ENCODE measurements at regions of chr13 and their contacts with region 1.

Region 1: GRCh38 chr13:42110410-42111155 is 62.1 kb downstream of the DGKH start:
- DNase-seq: peak in 21 of 35 experiments; percentile 2 to 82 (median 25)
- ATAC-seq: peak; percentile 52 to 71 (median 62)
- H3K4me3 ChIP-seq: no peak overlapping the region
- H3K4me3 Mint-ChIP-seq: no peak overlapping the region
- H3K27ac ChIP-seq: no peak overlapping the region
- H3K27ac Mint-ChIP-seq: no peak overlapping the region
- H3K4me1 ChIP-seq: no peaks in the 10 kb centered on the region
- H3K4me1 Mint-ChIP-seq: peaks cover 6 to 10% (median 8%) of the 10 kb centered on the region in 3 donors
- H3K27me3 ChIP-seq: no peaks in the 10 kb centered on the region
- H3K27me3 Mint-ChIP-seq: no peaks in the 10 kb centered on the region

Region 2: DNA sequence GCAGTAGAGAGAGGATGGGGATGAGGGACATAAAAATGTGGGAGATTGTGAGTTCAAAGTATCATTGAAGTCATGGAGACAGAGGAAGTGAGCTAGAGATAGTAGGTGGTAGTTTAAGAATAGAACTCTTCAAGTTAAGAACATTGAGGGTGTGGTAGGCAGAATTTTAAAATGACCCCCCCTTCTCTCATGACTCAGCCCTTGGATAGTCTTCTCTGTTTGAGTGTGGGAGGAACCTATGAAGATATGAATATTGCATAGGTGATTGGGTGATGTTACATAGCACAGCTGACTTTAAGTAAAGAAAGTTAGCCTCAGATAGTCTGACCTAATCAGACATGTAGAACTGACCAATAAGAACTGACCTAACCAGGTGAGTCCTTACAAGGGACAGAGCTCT is 1862.7 kb before region 1 on chr13:
- CTCF ChIA-PET with region 1: no interaction called
- POLR2A ChIA-PET with region 1: no interaction called
- DNase-seq: no peak
- ATAC-seq: no peak
- H3K4me3 ChIP-seq: no peak overlapping the region
- H3K4me3 Mint-ChIP-seq: no peak overlapping the region
- H3K27ac ChIP-seq: no peak overlapping the region
- H3K27ac Mint-ChIP-seq: no peak overlapping the region
- H3K4me1 ChIP-seq: no peaks in the 10 kb centered on the region
- H3K4me1 Mint-ChIP-seq: peaks cover 19 to 28% (median 22%) of the 10 kb centered on the region in 3 donors
- H3K27me3 ChIP-seq: no peaks in the 10 kb centered on the region
- H3K27me3 Mint-ChIP-seq: no peaks in the 10 kb centered on the region

Region 3: DNA sequence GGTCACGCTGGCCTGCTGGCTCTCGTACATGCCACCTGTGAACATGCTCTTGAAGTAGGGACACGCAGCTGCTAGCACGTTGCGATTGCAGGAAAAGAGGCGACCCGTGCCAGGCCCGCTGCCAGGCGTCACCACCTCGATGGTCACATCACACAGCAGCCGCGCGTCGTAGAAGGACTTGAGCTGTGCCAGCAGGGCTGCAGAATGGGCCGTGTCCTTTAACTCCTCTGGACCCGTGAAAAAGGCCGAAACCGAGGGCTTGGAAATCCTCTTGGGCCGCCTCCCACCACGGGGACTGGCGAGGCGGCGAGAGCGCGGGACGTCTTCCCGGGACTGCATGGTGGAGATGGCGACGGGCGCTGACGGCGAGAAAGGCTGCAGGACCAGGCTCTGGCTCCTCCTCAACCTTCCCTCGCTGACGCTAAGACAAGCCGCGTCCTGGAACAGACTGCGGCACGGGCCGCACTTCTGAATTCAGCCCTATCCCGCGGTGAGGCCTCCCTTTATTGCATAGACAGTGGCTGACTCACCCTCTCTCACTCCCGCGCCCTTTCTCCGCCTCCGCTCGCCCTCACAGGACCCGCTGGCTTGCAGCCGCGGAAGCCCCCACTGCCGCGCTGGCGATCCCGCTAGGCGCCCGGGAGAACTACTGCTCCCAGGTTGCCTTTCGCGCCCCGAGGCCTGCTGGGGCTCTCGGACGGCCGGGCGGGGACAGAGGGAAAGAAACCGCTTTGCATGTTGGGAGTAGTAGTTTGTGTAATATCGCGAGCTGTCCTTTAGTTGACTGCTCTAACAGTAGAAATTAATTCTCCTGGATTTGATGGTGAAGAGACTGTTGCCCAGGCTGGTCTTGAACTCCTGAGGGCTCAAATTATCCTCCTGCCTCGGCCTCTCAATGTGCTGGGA is 916.4 kb before region 1 on chr13 and contains the start of gene KBTBD7:
- CTCF ChIA-PET with region 1: no interaction called
- POLR2A ChIA-PET with region 1: no interaction called
- DNase-seq: peak; percentile 76 to 91 (median 83)
- ATAC-seq: peak; percentile 98 to 99 (median 98)
- H3K4me3 ChIP-seq: peak within 1 kb of the TSS; percentile 94 to 95
- H3K4me3 Mint-ChIP-seq: peak within 1 kb of the TSS; percentile 87 to 95 (median 92)
- H3K27ac ChIP-seq: peak within 1 kb of the TSS; percentile 76
- H3K27ac Mint-ChIP-seq: peak within 1 kb of the TSS; percentile 89 to 90
- H3K4me1 ChIP-seq: peaks cover 10 to 18% of the 10 kb centered on the region in 2 experiments
- H3K4me1 Mint-ChIP-seq: peaks cover 38 to 47% (median 43%) of the 10 kb centered on the region in 3 donors
- H3K27me3 ChIP-seq: no peaks in the 10 kb centered on the region
- H3K27me3 Mint-ChIP-seq: no peaks in the 10 kb centered on the region
- total RNA-seq, gene KBTBD7: 2.6 to 10.9 (median 9.3) TPM

Region 4: GRCh38 chr13:41668130-41668757 is 442.3 kb before region 1 on chr13:
- CTCF ChIA-PET with region 1: interaction called, 4 to 33 read pairs
- POLR2A ChIA-PET with region 1: no interaction called
- DNase-seq: peak in 20 of 35 experiments; percentile 1 to 70 (median 10)
- ATAC-seq: peak; percentile 65 to 81 (median 68)
- H3K4me3 ChIP-seq: no peak overlapping the region
- H3K4me3 Mint-ChIP-seq: no peak overlapping the region
- H3K27ac ChIP-seq: no peak overlapping the region
- H3K27ac Mint-ChIP-seq: no peak overlapping the region
- H3K4me1 ChIP-seq: no peaks in the 10 kb centered on the region
- H3K4me1 Mint-ChIP-seq: no peaks in the 10 kb centered on the region
- H3K27me3 ChIP-seq: no peaks in the 10 kb centered on the region
- H3K27me3 Mint-ChIP-seq: no peaks in the 10 kb centered on the region

Region 5: GRCh38 chr13:41955605-41956004 is 155.0 kb before region 1 on chr13:
- CTCF ChIA-PET with region 1: no interaction called
- POLR2A ChIA-PET with region 1: no interaction called
- DNase-seq: no peak
- ATAC-seq: no peak
- H3K4me3 ChIP-seq: no peak overlapping the region
- H3K4me3 Mint-ChIP-seq: no peak overlapping the region
- H3K27ac ChIP-seq: no peak overlapping the region
- H3K27ac Mint-ChIP-seq: no peak overlapping the region
- H3K4me1 ChIP-seq: peaks cover 10 to 11% of the 10 kb centered on the region in 2 experiments
- H3K4me1 Mint-ChIP-seq: peaks cover 54 to 68% (median 56%) of the 10 kb centered on the region in 3 donors
- H3K27me3 ChIP-seq: no peaks in the 10 kb centered on the region
- H3K27me3 Mint-ChIP-seq: no peaks in the 10 kb centered on the region

Region 6: DNA sequence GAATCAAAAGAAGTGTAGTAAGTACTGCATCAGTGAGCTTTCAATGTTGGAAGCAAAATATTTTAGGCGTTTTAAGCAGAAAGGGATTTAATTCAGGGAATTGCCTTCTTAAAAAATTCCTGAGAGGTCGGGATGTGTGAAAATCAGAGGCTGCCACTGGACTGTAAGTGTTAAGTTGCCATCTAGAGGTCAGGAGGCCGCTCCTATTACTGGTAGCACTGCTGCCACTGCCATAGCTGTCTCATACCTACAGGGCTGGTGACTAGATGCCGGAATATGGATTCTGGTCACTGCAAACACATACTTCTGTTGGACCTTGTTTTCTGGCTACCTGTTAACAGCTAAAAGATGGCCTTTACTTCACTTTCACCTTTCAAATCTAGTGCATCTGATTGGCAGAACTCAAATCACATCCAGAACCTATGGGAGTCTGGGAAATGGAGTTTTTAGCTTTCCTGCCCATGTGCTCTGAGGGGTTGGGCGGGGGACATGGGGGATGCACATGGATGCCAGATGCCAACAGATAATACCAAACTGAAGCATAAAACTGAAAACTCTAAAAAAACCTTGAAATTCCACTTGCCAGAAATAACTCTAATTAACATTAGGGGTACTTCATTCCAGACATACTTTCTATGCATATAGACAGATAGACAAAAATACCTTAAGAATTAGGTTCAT is 32.3 kb before region 1 on chr13:
- CTCF ChIA-PET with region 1: no interaction called
- POLR2A ChIA-PET with region 1: no interaction called
- DNase-seq: no peak
- ATAC-seq: no peak
- H3K4me3 ChIP-seq: no peak overlapping the region
- H3K4me3 Mint-ChIP-seq: no peak overlapping the region
- H3K27ac ChIP-seq: no peak overlapping the region
- H3K27ac Mint-ChIP-seq: no peak overlapping the region
- H3K4me1 ChIP-seq: peaks cover 0 to 5% of the 10 kb centered on the region in 2 experiments
- H3K4me1 Mint-ChIP-seq: peaks cover 11 to 26% (median 12%) of the 10 kb centered on the region in 3 donors
- H3K27me3 ChIP-seq: no peaks in the 10 kb centered on the region
- H3K27me3 Mint-ChIP-seq: no peaks in the 10 kb centered on the region

Measured in T-cell (primary cell).